PC-9 (cell line): ENCODE measurements at regions of chr6 and their contacts with region 1.

Region 1: DNA sequence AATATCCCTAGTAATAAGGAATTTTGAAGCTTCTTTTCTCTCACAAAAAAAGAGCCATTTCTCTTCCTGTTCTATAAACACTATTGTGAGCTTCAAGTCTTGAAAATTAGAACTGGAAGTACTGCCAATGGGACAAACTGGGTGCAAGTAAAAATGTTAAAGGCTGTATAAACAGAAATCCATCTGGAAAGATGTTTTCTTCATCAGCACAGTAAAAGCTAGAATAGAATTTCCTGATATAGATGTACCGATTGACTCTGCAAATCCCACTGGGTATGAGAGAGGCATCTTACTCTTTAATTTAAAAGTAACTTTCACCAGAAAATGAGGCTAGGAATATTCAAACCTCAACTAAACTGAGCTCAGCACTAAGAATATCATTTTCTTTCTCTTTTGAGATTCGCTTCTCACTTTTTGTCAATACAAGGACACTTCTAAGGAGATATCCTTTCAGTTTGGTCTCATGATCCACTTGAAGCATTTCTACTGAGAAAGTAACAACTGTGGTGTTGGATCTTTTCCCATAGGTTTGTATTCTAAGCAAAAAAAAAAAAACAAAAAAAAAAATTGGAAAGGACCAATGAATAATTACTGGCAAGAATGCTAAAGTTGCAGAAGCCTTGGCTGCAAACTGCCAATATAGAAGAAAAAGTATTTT is 169.0 kb upstream of the PRDM1 start:
- DNase-seq: no peak
- H3K4me3 ChIP-seq: no peak overlapping the region
- H3K27ac ChIP-seq: no peak overlapping the region
- H3K4me1 ChIP-seq: no peaks in the 10 kb centered on the region; the same call in 1 of the 2 replicates
- H3K27me3 ChIP-seq: no peaks in the 10 kb centered on the region
- CTCF ChIP-seq: no peak

Region 2: DNA sequence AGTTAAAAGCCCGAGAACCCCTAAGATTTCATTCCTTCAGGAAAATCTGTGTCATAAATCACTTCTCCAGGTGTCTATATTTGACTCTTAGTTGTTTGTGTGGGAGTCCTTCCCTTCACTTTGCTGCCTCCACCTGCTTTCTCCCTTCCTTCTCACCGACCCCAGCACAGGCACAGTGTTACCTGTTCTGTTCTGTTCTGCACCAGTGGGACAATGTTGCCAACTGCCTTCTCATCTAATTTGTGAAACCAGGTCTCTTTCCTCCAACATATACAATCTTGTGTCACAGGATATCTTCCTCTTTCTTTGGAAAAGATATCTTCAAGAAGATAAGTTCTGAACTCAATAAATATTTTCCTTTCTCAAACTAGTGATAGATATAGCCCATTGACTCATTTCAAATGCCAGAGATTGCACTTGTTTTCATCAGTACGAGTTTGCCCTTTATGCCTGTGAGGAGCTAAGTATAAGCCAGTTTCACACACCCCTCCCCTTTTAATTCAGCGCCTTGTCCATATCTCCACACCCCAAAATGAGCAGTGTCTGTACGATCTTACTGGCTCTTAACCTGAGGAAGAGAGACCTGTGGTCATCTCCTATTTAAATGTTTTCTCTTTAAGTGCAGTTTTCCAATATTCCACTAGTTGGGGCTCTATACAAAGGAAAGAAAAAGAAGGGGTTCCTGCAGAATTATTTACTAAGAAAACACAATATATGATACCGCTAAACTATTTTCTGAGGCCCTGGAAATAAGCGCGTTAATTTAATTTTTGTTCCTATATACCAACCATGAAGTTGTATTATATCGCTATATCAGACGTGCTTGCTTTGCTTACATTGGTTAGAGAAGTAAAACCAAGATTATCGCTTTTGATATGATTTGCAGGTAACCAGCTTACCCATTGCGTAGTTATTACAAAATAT is 432.7 kb before region 1 on chr6:
- CTCF ChIA-PET with region 1: interaction called, 27 read pairs
- POLR2A ChIA-PET with region 1: no interaction called
- intact Hi-C with region 1: no loop called
- DNase-seq: peak in 1 of 2 experiments; percentile 53
- H3K4me3 ChIP-seq: no peak overlapping the region
- H3K27ac ChIP-seq: no peak overlapping the region
- H3K4me1 ChIP-seq: peaks cover 13% of the 10 kb centered on the region
- H3K27me3 ChIP-seq: no peaks in the 10 kb centered on the region
- CTCF ChIP-seq: peak; percentile 97

Region 3: GRCh38 chr6:105769987-105770386 is 147.2 kb before region 1 on chr6:
- CTCF ChIA-PET with region 1: no interaction called
- POLR2A ChIA-PET with region 1: no interaction called
- intact Hi-C with region 1: no loop called
- DNase-seq: peak; percentile 26 to 80
- H3K4me3 ChIP-seq: no peak overlapping the region
- H3K27ac ChIP-seq: peak overlapping the region; percentile 69
- H3K4me1 ChIP-seq: peaks cover 15% of the 10 kb centered on the region
- H3K27me3 ChIP-seq: no peaks in the 10 kb centered on the region
- CTCF ChIP-seq: no peak

Region 4: GRCh38 chr6:105880030-105880492 is 37.1 kb before region 1 on chr6:
- CTCF ChIA-PET with region 1: no interaction called
- POLR2A ChIA-PET with region 1: no interaction called
- intact Hi-C with region 1: no loop called
- DNase-seq: no peak
- H3K4me3 ChIP-seq: no peak overlapping the region
- H3K27ac ChIP-seq: no peak overlapping the region
- H3K4me1 ChIP-seq: no peaks in the 10 kb centered on the region
- H3K27me3 ChIP-seq: no peaks in the 10 kb centered on the region
- CTCF ChIP-seq: no peak